CD4-positive, alpha-beta T cell (primary cell): ENCODE measurements at regions of chr4 and their contacts with region 1.

Region 1: DNA sequence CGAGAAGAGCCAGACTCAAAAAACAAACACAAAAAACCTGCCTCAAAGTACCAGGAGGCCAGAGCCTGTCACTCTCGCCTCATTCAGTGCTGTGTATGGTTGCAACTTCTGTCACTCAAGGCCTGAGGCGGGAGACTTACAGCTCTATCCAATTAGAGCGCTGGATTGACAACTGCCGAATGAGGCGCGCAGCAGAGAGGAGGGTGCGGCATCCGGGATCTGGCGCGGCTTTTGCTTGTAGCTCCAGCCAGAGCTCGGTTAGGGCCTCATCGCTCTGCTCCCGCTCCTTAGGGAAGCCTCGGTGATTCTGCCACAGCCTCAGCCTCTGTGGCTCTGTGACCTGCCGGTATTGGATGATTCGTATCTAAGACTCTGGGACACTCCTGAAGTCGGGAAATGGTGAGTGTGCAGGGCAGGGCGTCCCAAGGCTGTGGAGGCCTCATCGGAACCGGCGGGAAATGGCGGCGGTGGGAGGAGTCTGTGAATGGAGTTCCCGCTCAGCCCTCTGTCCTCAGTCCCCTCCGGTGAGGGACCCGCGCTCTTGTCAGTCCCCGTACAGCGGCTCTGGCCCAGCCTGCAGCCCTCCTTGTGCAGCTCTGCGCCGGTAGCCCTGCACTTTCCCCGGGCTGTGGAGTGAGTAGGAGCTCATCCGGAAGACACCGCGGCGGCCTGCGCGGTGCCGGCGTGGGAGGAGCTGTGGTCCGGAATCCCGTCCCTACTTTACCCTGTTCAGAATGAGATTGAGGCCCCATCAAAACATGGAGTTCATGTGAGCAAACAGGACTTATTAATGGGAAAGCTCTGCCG is at the start of gene ZNF718:
- DNase-seq: peak; percentile 77 to 96 (median 87)
- ATAC-seq: peak; percentile 94
- H3K4me3 ChIP-seq: peak within 1 kb of the TSS; percentile 90
- H3K4me3 Mint-ChIP-seq: peak within 1 kb of the TSS; percentile 99
- H3K27ac ChIP-seq: peak within 1 kb of the TSS; percentile 79 to 88
- H3K27ac Mint-ChIP-seq: peak within 1 kb of the TSS; percentile 98
- H3K4me1 ChIP-seq: peaks cover 48% of the 10 kb centered on the region
- H3K4me1 Mint-ChIP-seq: peaks cover 57% of the 10 kb centered on the region
- H3K27me3 ChIP-seq: no peaks in the 10 kb centered on the region
- H3K27me3 Mint-ChIP-seq: no peaks in the 10 kb centered on the region
- CTCF ChIP-seq: no peak
- total RNA-seq, gene ZNF718: 6.3 to 7.4 TPM

Region 2: DNA sequence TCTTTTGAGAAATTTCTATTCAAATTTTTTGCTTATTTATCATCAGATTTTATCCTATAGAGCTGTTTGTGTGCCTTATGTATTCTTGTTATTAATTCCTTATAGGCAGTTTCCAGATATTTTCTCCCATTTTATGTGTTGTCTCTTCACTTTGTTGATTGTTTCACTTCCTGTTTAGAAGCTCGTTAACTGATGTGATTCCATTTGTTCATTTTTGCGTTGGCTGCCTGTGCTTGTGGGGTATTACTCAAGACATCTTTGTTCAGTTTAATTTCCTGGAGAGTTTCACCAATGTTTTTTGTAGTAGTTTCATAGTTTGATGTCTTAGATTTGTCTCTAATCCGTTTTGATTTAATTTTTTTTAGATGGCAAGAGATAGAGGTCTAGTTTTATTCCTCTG is 14.5 kb after region 1 on chr4:
- CTCF ChIA-PET with region 1: interaction called, 3 read pairs
- POLR2A ChIA-PET with region 1: interaction called, 10 read pairs
- intact Hi-C with region 1: loop called in 1 of 2 experiments (anchors 1 kb)
- DNase-seq: no peak
- ATAC-seq: no peak
- H3K4me3 ChIP-seq: no peak overlapping the region
- H3K4me3 Mint-ChIP-seq: no peak overlapping the region
- H3K27ac ChIP-seq: no peak overlapping the region
- H3K27ac Mint-ChIP-seq: no peak overlapping the region
- H3K4me1 ChIP-seq: no peaks in the 10 kb centered on the region
- H3K4me1 Mint-ChIP-seq: peaks cover 19% of the 10 kb centered on the region
- H3K27me3 ChIP-seq: no peaks in the 10 kb centered on the region
- H3K27me3 Mint-ChIP-seq: no peaks in the 10 kb centered on the region
- CTCF ChIP-seq: no peak

Region 3: DNA sequence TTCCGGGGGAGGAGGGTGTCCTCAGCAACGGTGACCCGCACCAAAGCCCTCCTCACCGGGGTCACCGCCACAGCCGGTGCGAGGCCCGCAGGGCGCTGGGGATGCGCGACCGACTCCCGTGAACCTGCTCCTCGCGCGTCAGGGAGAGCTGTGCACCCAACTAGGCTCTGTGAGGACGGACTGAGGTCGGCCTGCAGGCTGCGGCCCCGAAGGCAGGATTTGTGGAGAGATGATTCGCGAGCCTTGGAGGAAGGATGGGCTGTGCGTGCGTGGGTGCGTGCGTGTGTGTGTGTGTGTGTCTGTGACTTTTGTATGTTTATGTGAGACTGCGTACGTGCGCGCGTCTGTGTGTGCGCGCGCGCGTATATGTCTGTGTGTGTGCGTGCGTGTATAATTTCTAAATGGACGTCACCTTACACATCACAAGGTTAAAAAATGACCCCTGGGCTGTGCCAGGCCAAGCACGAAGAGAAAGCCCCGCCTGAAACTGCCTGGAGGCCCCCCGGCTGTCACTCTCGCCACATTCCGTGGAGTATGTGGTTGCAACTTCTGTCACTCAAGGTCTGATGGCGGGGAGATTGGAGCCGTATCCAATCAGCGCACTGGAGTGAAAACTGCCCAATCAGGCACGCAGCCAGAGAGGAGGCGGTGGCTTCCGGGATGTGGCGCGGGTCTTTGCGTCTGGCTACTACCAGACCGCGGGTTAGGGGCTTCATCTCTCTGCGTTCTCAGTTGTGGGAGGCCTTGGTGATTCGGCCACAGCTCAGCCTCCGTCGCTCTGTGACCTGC is 212.9 kb after region 1 on chr4 and contains the start of gene ZNF141:
- CTCF ChIA-PET with region 1: no interaction called
- POLR2A ChIA-PET with region 1: interaction called, 36 read pairs
- intact Hi-C with region 1: loop called in 1 of 2 experiments (anchors 5 kb)
- DNase-seq: peak; percentile 81 to 97 (median 87)
- ATAC-seq: peak; percentile 87
- H3K4me3 ChIP-seq: peak within 1 kb of the TSS; percentile 98
- H3K4me3 Mint-ChIP-seq: peak within 1 kb of the TSS; percentile 94
- H3K27ac ChIP-seq: peak within 1 kb of the TSS; percentile 85 to 91
- H3K27ac Mint-ChIP-seq: peak within 1 kb of the TSS; percentile 98
- H3K4me1 ChIP-seq: peaks cover 27% of the 10 kb centered on the region
- H3K4me1 Mint-ChIP-seq: peaks cover 51% of the 10 kb centered on the region
- H3K27me3 ChIP-seq: no peaks in the 10 kb centered on the region
- H3K27me3 Mint-ChIP-seq: no peaks in the 10 kb centered on the region
- CTCF ChIP-seq: no peak
- total RNA-seq, gene ZNF141: 13.6 to 13.7 TPM

Region 4: GRCh38 chr4:473570-474457 is 349.3 kb after region 1 on chr4:
- CTCF ChIA-PET with region 1: no interaction called
- POLR2A ChIA-PET with region 1: interaction called, 26 read pairs
- intact Hi-C with region 1: no loop called
- DNase-seq: peak; percentile 84 to 99 (median 89)
- ATAC-seq: peak; percentile 97
- H3K4me3 ChIP-seq: peak overlapping the region; percentile 82
- H3K4me3 Mint-ChIP-seq: peak overlapping the region; percentile 98
- H3K27ac ChIP-seq: peak overlapping the region; percentile 81 to 93
- H3K27ac Mint-ChIP-seq: peak overlapping the region; percentile 100
- H3K4me1 ChIP-seq: peaks cover 17% of the 10 kb centered on the region
- H3K4me1 Mint-ChIP-seq: peaks cover 43% of the 10 kb centered on the region
- H3K27me3 ChIP-seq: no peaks in the 10 kb centered on the region
- H3K27me3 Mint-ChIP-seq: no peaks in the 10 kb centered on the region
- CTCF ChIP-seq: no peak

Region 5: GRCh38 chr4:592825-593520 is 468.5 kb after region 1 on chr4:
- CTCF ChIA-PET with region 1: no interaction called
- POLR2A ChIA-PET with region 1: no interaction called
- intact Hi-C with region 1: no loop called
- DNase-seq: no peak
- ATAC-seq: no peak
- H3K4me3 ChIP-seq: no peak overlapping the region
- H3K4me3 Mint-ChIP-seq: no peak overlapping the region
- H3K27ac ChIP-seq: no peak overlapping the region
- H3K27ac Mint-ChIP-seq: no peak overlapping the region
- H3K4me1 ChIP-seq: no peaks in the 10 kb centered on the region
- H3K4me1 Mint-ChIP-seq: no peaks in the 10 kb centered on the region
- H3K27me3 ChIP-seq: peaks cover 0 to 6% of the 10 kb centered on the region in 2 experiments
- H3K27me3 Mint-ChIP-seq: peaks cover 58% of the 10 kb centered on the region
- CTCF ChIP-seq: no peak